Naive thymus-derived CD4-positive, alpha-beta T cell (primary cell): ENCODE measurements at regions of chr9 and their contacts with region 1.

Region 1: GRCh38 chr9:120875954-120876841 is 790 bp downstream of the PHF19 start:
- DNase-seq: peak; percentile 50 to 91 (median 56)
- ATAC-seq: peak; percentile 64
- H3K4me3 ChIP-seq: peak overlapping the region; percentile 66
- H3K4me3 Mint-ChIP-seq: peak overlapping the region; percentile 81 to 95 (median 85)
- H3K27ac ChIP-seq: peak overlapping the region; percentile 88
- H3K27ac Mint-ChIP-seq: peak overlapping the region; percentile 76 to 97 (median 90)
- H3K4me1 ChIP-seq: peaks cover 31 to 39% of the 10 kb centered on the region in 2 donors
- H3K4me1 Mint-ChIP-seq: peaks cover 38 to 78% (median 69%) of the 10 kb centered on the region in 7 donors
- H3K27me3 ChIP-seq: no peaks in the 10 kb centered on the region
- H3K27me3 Mint-ChIP-seq: no peaks in the 10 kb centered on the region

Region 2: GRCh38 chr9:120856700-120857099 is 19.5 kb before region 1 on chr9:
- CTCF ChIA-PET with region 1: no interaction called
- POLR2A ChIA-PET with region 1: no interaction called
- intact Hi-C with region 1: no loop called
- DNase-seq: no peak
- ATAC-seq: no peak
- H3K4me3 ChIP-seq: no peak overlapping the region
- H3K4me3 Mint-ChIP-seq: no peak overlapping the region
- H3K27ac ChIP-seq: no peak overlapping the region
- H3K27ac Mint-ChIP-seq: peak overlapping the region in 2 of 9 donors; percentile 21 to 36
- H3K4me1 ChIP-seq: no peaks in the 10 kb centered on the region
- H3K4me1 Mint-ChIP-seq: peaks cover 4 to 23% (median 18%) of the 10 kb centered on the region in 7 donors
- H3K27me3 ChIP-seq: no peaks in the 10 kb centered on the region
- H3K27me3 Mint-ChIP-seq: no peaks in the 10 kb centered on the region

Region 3: GRCh38 chr9:120892748-120893610 is 16.8 kb after region 1 on chr9:
- CTCF ChIA-PET with region 1: interaction called, 24 read pairs
- POLR2A ChIA-PET with region 1: interaction called, 703 read pairs
- intact Hi-C with region 1: loop called (anchors 1 kb)
- DNase-seq: peak in 7 of 9 donors; percentile 43 to 77 (median 64)
- ATAC-seq: peak; percentile 65
- H3K4me3 ChIP-seq: peak overlapping the region; percentile 17
- H3K4me3 Mint-ChIP-seq: peak overlapping the region; percentile 54 to 85 (median 80)
- H3K27ac ChIP-seq: peak overlapping the region; percentile 90
- H3K27ac Mint-ChIP-seq: peak overlapping the region; percentile 92 to 100 (median 99)
- H3K4me1 ChIP-seq: peaks cover 64 to 91% of the 10 kb centered on the region in 2 donors
- H3K4me1 Mint-ChIP-seq: peaks cover 40 to 88% (median 74%) of the 10 kb centered on the region in 7 donors
- H3K27me3 ChIP-seq: no peaks in the 10 kb centered on the region
- H3K27me3 Mint-ChIP-seq: no peaks in the 10 kb centered on the region

Region 4: GRCh38 chr9:120909904-120910303 is 33.7 kb after region 1 on chr9:
- CTCF ChIA-PET with region 1: interaction called, 7 read pairs
- POLR2A ChIA-PET with region 1: interaction called, 703 read pairs
- intact Hi-C with region 1: loop called in 1 of 2 experiments (anchors 1 kb)
- DNase-seq: peak in 1 of 9 donors; percentile 67
- ATAC-seq: peak; percentile 50
- H3K4me3 ChIP-seq: peak overlapping the region; percentile 10
- H3K4me3 Mint-ChIP-seq: peak overlapping the region in 6 of 10 donors; percentile 25 to 59 (median 32)
- H3K27ac ChIP-seq: peak overlapping the region; percentile 69
- H3K27ac Mint-ChIP-seq: peak overlapping the region in 8 of 9 donors; percentile 59 to 95 (median 82)
- H3K4me1 ChIP-seq: peaks cover 57 to 59% of the 10 kb centered on the region in 2 donors
- H3K4me1 Mint-ChIP-seq: peaks cover 46 to 88% (median 80%) of the 10 kb centered on the region in 7 donors
- H3K27me3 ChIP-seq: no peaks in the 10 kb centered on the region
- H3K27me3 Mint-ChIP-seq: no peaks in the 10 kb centered on the region

Region 5: GRCh38 chr9:120928483-120929228 is 52.5 kb after region 1 on chr9:
- CTCF ChIA-PET with region 1: interaction called, 11 read pairs
- POLR2A ChIA-PET with region 1: interaction called, 243 read pairs
- intact Hi-C with region 1: loop called (anchors 1 kb)
- DNase-seq: peak; percentile 63 to 86 (median 74)
- ATAC-seq: peak; percentile 58
- H3K4me3 ChIP-seq: peak overlapping the region; percentile 79
- H3K4me3 Mint-ChIP-seq: peak overlapping the region; percentile 90 to 100 (median 96)
- H3K27ac ChIP-seq: peak overlapping the region; percentile 97
- H3K27ac Mint-ChIP-seq: peak overlapping the region; percentile 95 to 100 (median 99)
- H3K4me1 ChIP-seq: peaks cover 62 to 84% of the 10 kb centered on the region in 2 donors
- H3K4me1 Mint-ChIP-seq: peaks cover 57 to 95% (median 86%) of the 10 kb centered on the region in 7 donors
- H3K27me3 ChIP-seq: no peaks in the 10 kb centered on the region
- H3K27me3 Mint-ChIP-seq: no peaks in the 10 kb centered on the region

Region 6: DNA sequence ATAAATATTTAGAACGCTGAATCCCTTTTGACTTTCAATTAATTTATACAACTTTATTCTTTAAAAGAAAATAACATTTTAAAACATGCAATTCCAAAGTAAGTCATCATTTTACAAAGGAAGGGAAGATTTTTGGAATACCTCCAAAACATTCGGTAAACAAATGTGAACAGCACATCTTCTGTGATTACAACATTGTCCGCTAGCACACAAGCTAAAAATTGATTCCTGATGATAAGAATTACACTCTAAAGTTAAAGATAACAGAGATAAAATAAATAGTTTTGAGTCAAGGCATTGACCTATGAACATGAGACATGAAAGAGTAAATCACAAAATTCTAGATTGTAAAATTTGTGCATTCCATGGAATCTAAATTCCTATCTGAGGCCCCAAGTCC is 106.6 kb after region 1 on chr9:
- CTCF ChIA-PET with region 1: no interaction called
- POLR2A ChIA-PET with region 1: no interaction called
- intact Hi-C with region 1: loop called in 1 of 2 experiments (anchors 1 kb)
- DNase-seq: no peak
- ATAC-seq: no peak
- H3K4me3 ChIP-seq: no peak overlapping the region
- H3K4me3 Mint-ChIP-seq: no peak overlapping the region
- H3K27ac ChIP-seq: no peak overlapping the region
- H3K27ac Mint-ChIP-seq: no peak overlapping the region
- H3K4me1 ChIP-seq: no peaks in the 10 kb centered on the region
- H3K4me1 Mint-ChIP-seq: peaks cover 0 to 10% (median 4%) of the 10 kb centered on the region in 7 donors
- H3K27me3 ChIP-seq: no peaks in the 10 kb centered on the region
- H3K27me3 Mint-ChIP-seq: peaks cover 0 to 30% (median 0%) of the 10 kb centered on the region in 5 donors

Region 7: DNA sequence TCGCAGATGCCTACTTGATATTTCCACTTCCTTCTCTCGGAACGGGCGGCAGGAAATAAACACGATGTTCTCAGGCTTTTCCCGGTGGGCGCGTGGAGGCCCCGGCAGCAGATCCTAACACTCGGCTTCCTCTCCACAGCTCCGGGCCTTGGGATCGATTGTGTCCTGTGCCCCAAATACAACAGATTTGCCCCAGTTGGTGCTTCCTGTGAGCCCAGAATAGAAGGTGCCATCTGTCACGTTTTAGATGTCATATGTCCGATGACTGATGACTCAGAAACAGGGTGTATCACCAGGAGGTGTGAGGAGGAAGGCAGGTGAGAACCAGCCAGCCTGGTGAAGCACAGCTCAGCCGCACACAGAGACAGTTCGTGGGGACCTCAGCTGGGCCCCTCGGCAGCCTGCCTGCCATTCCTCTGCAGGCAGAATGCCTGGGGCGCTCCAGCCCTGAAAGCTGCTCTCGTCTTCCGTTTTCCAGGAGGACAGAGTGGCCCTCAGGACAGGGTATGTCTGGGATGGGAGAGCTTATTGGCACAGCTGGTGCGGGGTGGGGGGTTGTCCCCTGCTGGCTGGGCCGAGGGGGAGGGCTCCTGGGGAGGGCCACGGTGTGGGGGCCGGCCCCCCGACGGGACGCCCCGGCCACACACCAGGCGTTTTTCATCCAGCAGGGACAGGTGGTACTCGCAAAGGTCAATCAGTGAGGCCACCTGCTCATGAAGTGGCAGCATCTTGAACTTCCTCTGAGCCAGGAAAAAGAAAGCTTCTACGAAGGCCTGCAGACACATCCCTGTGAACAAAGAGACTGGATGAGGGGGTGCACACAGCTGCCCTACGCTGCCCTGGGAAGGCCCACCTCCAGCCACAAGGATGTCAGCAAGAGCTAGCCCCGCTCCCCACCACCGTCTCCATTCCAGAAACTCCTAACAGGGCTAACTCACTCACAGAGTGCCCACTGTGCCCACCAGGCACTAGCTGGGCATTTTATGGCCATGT is 946.2 kb after region 1 on chr9:
- CTCF ChIA-PET with region 1: no interaction called
- POLR2A ChIA-PET with region 1: no interaction called
- intact Hi-C with region 1: no loop called
- DNase-seq: no peak
- ATAC-seq: no peak
- H3K4me3 ChIP-seq: no peak overlapping the region
- H3K4me3 Mint-ChIP-seq: no peak overlapping the region
- H3K27ac ChIP-seq: no peak overlapping the region
- H3K27ac Mint-ChIP-seq: no peak overlapping the region
- H3K4me1 ChIP-seq: no peaks in the 10 kb centered on the region
- H3K4me1 Mint-ChIP-seq: no peaks in the 10 kb centered on the region
- H3K27me3 ChIP-seq: no peaks in the 10 kb centered on the region
- H3K27me3 Mint-ChIP-seq: no peaks in the 10 kb centered on the region